ENCODE measurements at regions of chr2 and their contacts with region 1.

Region 1: GRCh38 chr2:40554668-40555285 is 102.9 kb upstream of the SLC8A1 start:
- DNase-seq: peak in 4 of 5 donors; percentile 48 to 74 (median 64)
- ATAC-seq: peak in 3 of 4 donors; percentile 81 to 83 (median 83)
- H3K4me3 ChIP-seq: peak overlapping the region in 2 of 12 donors; percentile 3 to 24
- H3K27ac ChIP-seq: peak overlapping the region in 2 of 12 donors; percentile 55 to 60
- H3K4me1 ChIP-seq: peaks cover 0 to 11% (median 0%) of the 10 kb centered on the region in 12 donors
- H3K27me3 ChIP-seq: no peaks in the 10 kb centered on the region
- CTCF ChIP-seq: peak; percentile 81 to 96 (median 90)
- POLR2A ChIP-seq: no peak

Region 2: DNA sequence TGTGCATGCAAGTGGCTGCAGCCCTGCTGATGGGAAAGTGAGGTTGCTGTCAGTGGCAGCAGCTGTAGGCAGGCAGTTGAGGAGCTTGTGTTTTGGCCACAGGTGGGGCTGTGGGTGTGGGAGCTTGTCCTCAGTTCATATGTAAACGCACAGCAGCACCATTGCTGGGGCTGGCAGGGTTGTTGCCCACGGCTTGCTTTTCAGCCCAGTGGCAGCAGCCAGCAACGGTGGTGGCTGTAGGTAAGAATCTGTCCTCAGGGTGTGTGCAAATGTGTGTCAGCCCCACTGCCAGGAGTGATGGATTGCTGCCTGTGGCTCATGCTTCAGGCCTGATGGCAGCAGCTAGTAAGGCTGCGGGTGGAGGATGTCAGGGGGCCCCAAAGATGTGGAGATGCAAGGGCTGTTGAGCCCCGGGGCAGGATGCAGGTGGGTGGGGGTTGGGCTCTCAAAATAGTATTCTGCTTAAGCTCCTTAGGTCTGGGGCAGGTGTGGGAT is 634.4 kb before region 1 on chr2:
- intact Hi-C with region 1: loop called in 4 of 10 experiments (anchors 2 to 10 kb)
- DNase-seq: no peak
- ATAC-seq: no peak
- H3K4me3 ChIP-seq: no peak overlapping the region
- H3K27ac ChIP-seq: no peak overlapping the region
- H3K4me1 ChIP-seq: peaks cover 0 to 3% (median 0%) of the 10 kb centered on the region in 12 donors
- H3K27me3 ChIP-seq: no peaks in the 10 kb centered on the region
- CTCF ChIP-seq: no peak
- POLR2A ChIP-seq: no peak

Region 3: DNA sequence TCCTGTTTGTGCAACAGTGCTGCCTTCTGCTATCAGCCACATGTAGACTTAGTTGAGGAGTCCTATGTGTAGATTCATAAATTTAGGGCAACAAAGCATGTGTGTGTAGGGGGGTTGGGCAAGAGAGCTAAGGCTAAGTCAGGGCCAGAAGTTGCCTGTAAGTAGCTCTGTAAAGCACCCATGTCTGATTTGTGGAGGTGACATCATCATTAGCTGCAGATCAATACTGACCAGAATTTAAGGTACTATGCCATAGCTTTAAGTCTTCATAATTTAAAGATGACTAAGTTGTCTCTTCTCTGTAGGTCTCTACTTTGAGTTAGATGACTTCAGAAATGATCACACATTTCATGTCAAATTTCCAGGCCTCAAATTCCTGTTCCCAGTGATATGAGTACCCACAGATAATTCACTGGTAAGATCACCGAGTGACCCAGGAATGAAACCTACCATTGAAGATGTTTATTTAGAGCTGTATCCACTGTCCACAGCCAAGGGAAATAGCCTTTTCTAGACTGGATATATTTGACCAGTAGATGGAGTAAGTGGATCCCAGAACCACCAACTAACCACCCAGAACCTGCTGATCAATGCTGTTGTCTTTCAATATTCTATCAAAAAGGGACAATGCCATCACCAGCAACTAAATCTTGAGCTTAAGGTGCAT is 341.8 kb before region 1 on chr2:
- intact Hi-C with region 1: loop called in 5 of 10 experiments (anchors 10 kb)
- DNase-seq: no peak
- ATAC-seq: peak in 3 of 4 donors; percentile 54 to 68 (median 58)
- H3K4me3 ChIP-seq: no peak overlapping the region
- H3K27ac ChIP-seq: no peak overlapping the region
- H3K4me1 ChIP-seq: peaks cover 0 to 26% (median 9%) of the 10 kb centered on the region in 12 donors
- H3K27me3 ChIP-seq: no peaks in the 10 kb centered on the region
- CTCF ChIP-seq: peak; percentile 12 to 61 (median 42)
- POLR2A ChIP-seq: no peak

Region 4: GRCh38 chr2:40244675-40245074 is 310.1 kb before region 1 on chr2:
- intact Hi-C with region 1: loop called in 5 of 10 experiments (anchors 5 to 10 kb)
- DNase-seq: peak in 4 of 5 donors; percentile 61 to 70 (median 68)
- ATAC-seq: peak; percentile 34 to 70 (median 68)
- H3K4me3 ChIP-seq: no peak overlapping the region
- H3K27ac ChIP-seq: peak overlapping the region in 10 of 12 donors; percentile 23 to 68 (median 54)
- H3K4me1 ChIP-seq: peaks cover 0 to 76% (median 46%) of the 10 kb centered on the region in 12 donors
- H3K27me3 ChIP-seq: no peaks in the 10 kb centered on the region
- CTCF ChIP-seq: peak; percentile 16 to 65 (median 54)
- POLR2A ChIP-seq: no peak

Region 5: DNA sequence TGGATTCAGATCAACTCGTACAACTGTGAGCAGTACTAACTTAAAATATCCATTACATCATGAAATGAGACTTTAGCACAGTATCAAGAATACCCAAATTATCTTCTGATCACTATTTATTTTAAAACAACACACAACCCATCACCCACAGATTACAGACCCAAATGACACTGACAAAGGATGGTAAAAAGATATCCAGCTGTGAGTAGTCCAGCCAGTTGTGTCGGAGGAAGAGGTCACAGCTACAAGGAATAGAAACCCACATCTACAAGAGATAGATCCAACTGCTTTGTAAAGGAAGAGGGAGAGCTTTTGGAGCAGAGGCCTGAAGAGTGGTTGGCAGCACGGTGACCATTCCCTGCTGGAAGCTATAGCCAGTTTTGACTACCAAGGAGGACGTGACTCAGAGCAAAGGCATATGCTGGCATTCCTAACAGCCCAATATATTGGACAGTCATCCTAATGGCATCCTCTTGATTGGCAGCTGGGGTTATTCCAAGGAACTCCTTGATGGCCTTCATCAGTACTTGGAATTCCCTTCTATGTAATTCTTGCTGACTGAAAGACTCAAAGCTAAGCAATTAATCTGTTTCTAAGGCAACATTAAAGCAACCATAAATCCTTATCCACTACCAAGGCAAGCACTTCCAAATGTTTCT is 120.0 kb before region 1 on chr2:
- intact Hi-C with region 1: no loop called
- DNase-seq: peak in 1 of 5 donors; percentile 33
- ATAC-seq: peak in 3 of 4 donors; percentile 25 to 48 (median 44)
- H3K4me3 ChIP-seq: no peak overlapping the region
- H3K27ac ChIP-seq: peak overlapping the region in 10 of 12 donors; percentile 3 to 70 (median 42)
- H3K4me1 ChIP-seq: peaks cover 0 to 98% (median 84%) of the 10 kb centered on the region in 12 donors
- H3K27me3 ChIP-seq: no peaks in the 10 kb centered on the region
- CTCF ChIP-seq: no peak
- POLR2A ChIP-seq: no peak

Region 6: GRCh38 chr2:40511661-40512213 is 43.0 kb before region 1 on chr2:
- intact Hi-C with region 1: loop called in 5 of 10 experiments (anchors 5 kb)
- DNase-seq: peak in 3 of 5 donors; percentile 18 to 30 (median 29)
- ATAC-seq: peak; percentile 27 to 66 (median 49)
- H3K4me3 ChIP-seq: peak overlapping the region; percentile 24 to 67 (median 60)
- H3K27ac ChIP-seq: peak overlapping the region; percentile 64 to 97 (median 92)
- H3K4me1 ChIP-seq: peaks cover 0 to 34% (median 8%) of the 10 kb centered on the region in 12 donors
- H3K27me3 ChIP-seq: no peaks in the 10 kb centered on the region
- CTCF ChIP-seq: no peak
- POLR2A ChIP-seq: no peak

Region 7: DNA sequence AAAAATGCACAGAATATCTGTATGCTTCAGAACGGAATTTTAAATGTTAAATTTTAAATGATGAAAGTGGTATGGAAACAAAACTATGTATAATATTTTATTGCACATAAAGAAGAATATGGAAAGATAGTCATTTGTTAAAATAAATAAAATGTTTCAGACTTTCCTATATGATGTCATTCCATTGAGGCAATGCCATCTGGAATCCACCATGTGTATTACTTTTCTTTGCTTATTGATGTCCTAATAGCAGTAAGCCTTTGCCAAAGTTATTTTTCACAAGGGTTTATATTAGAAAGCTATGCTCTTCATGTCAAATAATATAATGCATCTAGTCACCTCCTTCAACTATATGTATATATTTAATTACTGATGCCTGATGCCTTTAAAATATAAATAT is 891.5 kb after region 1 on chr2:
- intact Hi-C with region 1: no loop called
- DNase-seq: no peak
- ATAC-seq: no peak
- H3K4me3 ChIP-seq: no peak overlapping the region
- H3K27ac ChIP-seq: no peak overlapping the region
- H3K4me1 ChIP-seq: no peaks in the 10 kb centered on the region
- H3K27me3 ChIP-seq: no peaks in the 10 kb centered on the region
- CTCF ChIP-seq: no peak
- POLR2A ChIP-seq: no peak

Measured in heart left ventricle (tissue), 16 donors.